ENCODE measurements at regions of chr10 and their contacts with region 1.

Region 1: GRCh38 chr10:106107706-106108105 is 1056.8 kb downstream of the SORCS1 start:
- DNase-seq: peak; percentile 3
- H3K4me3 ChIP-seq: no peak overlapping the region
- H3K27ac ChIP-seq: no peak overlapping the region
- H3K4me1 ChIP-seq: no peaks in the 10 kb centered on the region
- H3K27me3 ChIP-seq: peaks cover 2% of the 10 kb centered on the region
- CTCF ChIP-seq: no peak

Region 2: DNA sequence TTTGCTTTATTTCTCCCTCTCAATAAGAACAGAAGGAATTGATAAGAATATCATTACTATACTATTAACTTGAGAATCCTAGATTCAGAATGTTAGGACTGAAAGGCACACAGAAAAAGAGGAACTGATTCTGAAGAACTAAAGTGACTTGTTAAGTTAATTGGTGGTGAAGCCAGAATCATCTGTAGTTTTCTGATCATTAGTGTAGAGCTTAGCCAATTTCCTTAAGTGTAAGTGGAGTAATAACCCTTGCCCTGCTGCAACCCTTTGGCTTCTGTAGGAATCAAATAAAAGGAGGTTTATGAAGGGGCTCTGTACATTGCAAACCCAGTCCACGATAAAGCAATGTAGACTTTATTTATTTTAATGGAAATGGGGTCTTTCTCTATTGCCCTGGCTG is 280.6 kb before region 1 on chr10:
- CTCF ChIA-PET with region 1: no interaction called
- dilution Hi-C with region 1: no loop called
- in situ Hi-C with region 1: no loop called
- intact Hi-C with region 1: loop called (anchors 5 kb)
- DNase-seq: no peak
- H3K4me3 ChIP-seq: no peak overlapping the region
- H3K27ac ChIP-seq: no peak overlapping the region
- H3K4me1 ChIP-seq: no peaks in the 10 kb centered on the region
- H3K27me3 ChIP-seq: no peaks in the 10 kb centered on the region
- CTCF ChIP-seq: no peak

Measured in mammary epithelial cell (primary cell).